Body of pancreas (tissue), 4 donors: ENCODE measurements at regions of chr7 and their contacts with region 1.

Region 1: DNA sequence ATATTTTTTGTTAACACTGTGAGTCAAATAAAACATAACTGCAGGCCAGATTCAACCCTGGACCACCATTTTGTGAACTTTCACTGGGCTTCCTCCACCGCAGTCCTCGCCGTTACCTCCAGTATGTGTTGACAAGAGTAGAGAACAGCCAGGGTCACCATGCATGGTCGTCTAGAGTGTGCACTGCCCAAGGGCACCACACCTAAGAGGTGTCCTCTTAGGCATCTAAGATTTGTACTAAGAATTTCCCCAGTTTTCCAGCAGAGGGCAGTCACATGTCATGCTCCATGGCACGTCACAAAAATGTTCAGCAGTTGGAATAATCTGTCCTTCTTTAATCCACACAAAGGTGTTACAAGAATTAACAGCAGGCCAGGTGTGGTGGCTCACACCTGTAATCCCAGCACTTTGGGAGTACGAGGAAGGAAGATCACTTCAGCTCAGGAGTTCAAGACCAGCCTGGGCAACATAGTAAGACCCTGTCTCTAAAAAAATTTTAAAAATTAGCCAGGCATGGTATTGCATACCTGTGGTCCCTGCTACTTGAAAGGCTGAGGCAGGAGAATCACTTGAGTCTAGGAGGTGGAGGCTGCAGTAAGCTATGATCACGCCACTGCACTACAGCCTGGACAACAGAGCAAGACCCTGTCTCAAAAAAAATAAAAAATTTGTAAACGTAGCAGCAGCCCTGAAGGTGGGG is 71.2 kb upstream of the FOXK1 start:
- DNase-seq: peak; percentile 53 to 71 (median 58)
- ATAC-seq: peak; percentile 76
- H3K4me3 ChIP-seq: no peak overlapping the region
- H3K27ac ChIP-seq: no peak overlapping the region
- H3K4me1 ChIP-seq: peaks cover 12% of the 10 kb centered on the region
- H3K27me3 ChIP-seq: no peaks in the 10 kb centered on the region
- CTCF ChIP-seq: peak; percentile 60 to 89 (median 80)
- POLR2A ChIP-seq: no peak

Region 2: GRCh38 chr7:4753711-4754432 is 143.0 kb after region 1 on chr7:
- intact Hi-C with region 1: loop called (anchors 10 kb)
- DNase-seq: peak; percentile 76 to 83 (median 80)
- ATAC-seq: peak; percentile 82
- H3K4me3 ChIP-seq: no peak overlapping the region
- H3K27ac ChIP-seq: no peak overlapping the region
- H3K4me1 ChIP-seq: peaks cover 10% of the 10 kb centered on the region
- H3K27me3 ChIP-seq: no peaks in the 10 kb centered on the region
- CTCF ChIP-seq: peak; percentile 72 to 87 (median 85)
- POLR2A ChIP-seq: no peak

Region 3: GRCh38 chr7:5083311-5083711 is 472.4 kb after region 1 on chr7:
- intact Hi-C with region 1: loop called (anchors 10 kb)
- DNase-seq: no peak
- ATAC-seq: no peak
- H3K4me3 ChIP-seq: no peak overlapping the region
- H3K27ac ChIP-seq: no peak overlapping the region
- H3K4me1 ChIP-seq: peaks cover 4% of the 10 kb centered on the region
- H3K27me3 ChIP-seq: no peaks in the 10 kb centered on the region
- CTCF ChIP-seq: no peak
- POLR2A ChIP-seq: no peak